Heart right ventricle (tissue), 16 donors: ENCODE measurements at regions of chr14 and their contacts with region 1.

Region 1: DNA sequence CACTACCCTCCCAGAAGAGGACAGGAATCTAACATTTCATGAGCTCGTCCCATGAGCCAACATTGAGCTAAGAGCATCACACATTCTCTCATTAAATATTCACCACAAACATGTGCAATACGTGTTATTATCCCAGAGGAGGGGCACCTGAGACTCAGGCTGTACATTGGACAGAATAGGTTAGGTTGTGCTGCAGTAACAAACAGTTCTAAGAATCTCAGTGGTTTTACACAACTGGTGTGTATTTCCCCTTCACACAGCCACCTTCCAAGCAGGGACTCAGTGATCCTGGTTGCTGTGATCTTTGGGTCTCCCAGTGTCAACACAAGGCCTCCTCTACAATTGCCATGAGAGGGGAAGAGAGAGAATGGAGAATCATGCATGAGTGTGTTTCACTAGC is 15.0 kb upstream of the ACTN1 start:
- DNase-seq: no peak
- ATAC-seq: no peak
- H3K4me3 ChIP-seq: no peak overlapping the region
- H3K27ac ChIP-seq: no peak overlapping the region
- H3K4me1 ChIP-seq: no peaks in the 10 kb centered on the region
- H3K27me3 ChIP-seq: no peaks in the 10 kb centered on the region
- CTCF ChIP-seq: no peak

Region 2: DNA sequence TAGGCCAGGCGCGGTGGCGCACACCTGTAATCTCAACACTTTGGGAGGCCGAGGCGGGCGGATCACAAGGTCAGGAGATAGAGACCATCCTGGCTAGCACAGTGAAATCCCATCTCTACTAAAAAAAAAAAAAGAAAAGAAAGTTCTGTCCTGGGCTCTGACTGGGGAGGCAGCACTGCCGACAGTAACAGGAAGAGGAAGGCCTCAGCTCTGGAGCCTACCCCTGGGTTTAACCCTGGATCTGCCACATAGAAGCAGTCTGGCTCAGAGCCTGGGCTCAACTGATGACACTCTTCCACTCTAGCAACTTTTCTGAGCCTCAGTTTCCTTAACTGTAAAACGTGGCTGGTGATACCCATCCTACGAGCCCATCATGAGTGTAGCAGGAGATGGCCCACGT is 75.4 kb before region 1 on chr14:
- intact Hi-C with region 1: loop called in 1 of 10 experiments (anchors 5 kb)
- DNase-seq: no peak
- ATAC-seq: no peak
- H3K4me3 ChIP-seq: no peak overlapping the region
- H3K27ac ChIP-seq: no peak overlapping the region
- H3K4me1 ChIP-seq: peaks cover 13 to 49% (median 29%) of the 10 kb centered on the region in 9 donors
- H3K27me3 ChIP-seq: no peaks in the 10 kb centered on the region
- CTCF ChIP-seq: no peak